A549 (cell line): ENCODE measurements at regions of chr22 and their contacts with region 1.

Region 1: DNA sequence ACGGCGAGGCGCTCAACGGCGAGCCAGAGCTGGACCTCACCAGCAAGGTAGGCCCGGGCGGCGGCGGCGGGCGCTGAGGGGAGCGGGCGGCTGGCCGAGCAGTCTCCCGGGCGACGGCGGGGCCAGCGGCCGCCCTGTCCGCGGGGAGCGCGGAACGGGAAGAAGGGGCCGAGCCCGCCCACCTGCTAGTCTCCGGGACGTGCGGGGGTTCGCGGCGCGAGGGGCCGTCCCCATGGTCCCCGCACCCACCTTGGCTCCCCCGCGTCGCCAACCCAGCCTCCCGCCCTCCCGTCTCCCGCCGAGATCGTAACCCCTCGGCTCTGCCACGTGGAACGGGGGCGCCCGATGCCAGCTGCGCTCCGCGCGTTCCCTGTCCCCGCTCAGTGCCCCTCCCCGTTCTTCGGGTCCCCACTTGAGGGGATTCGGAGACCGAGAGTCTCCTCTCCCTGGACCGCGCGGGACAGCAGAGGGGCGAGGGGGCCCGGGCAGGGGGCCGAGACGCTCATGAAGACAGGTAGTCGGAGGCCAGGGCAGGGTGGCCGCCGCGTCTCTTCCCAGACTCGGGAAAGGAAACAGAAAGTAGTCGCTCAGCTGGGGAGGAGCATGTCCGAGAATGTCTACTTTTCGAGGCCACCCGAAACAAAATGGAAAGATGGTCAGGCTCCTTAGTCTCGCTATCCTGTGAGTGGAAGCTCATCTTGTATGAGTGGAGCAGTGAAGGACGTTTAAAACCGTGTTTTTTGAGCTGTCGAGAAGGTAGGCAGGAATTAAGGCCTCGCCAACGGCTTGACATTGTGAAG is 557 bp downstream of the GTPBP1 start:
- DNase-seq: no peak
- ATAC-seq: peak; percentile 1 to 13; a peak in 5 of 6 replicates
- H3K4me3 ChIP-seq: peak overlapping the region; percentile 82
- H3K27ac ChIP-seq: peak overlapping the region; percentile 90 to 97
- H3K4me1 ChIP-seq: peaks cover 22% of the 10 kb centered on the region; the same call in 2 of the 3 replicates
- CTCF ChIP-seq: no peak
- EP300 ChIP-seq: no peak
- POLR2A ChIP-seq: no peak
- RAD21 ChIP-seq: no peak

Region 2: DNA sequence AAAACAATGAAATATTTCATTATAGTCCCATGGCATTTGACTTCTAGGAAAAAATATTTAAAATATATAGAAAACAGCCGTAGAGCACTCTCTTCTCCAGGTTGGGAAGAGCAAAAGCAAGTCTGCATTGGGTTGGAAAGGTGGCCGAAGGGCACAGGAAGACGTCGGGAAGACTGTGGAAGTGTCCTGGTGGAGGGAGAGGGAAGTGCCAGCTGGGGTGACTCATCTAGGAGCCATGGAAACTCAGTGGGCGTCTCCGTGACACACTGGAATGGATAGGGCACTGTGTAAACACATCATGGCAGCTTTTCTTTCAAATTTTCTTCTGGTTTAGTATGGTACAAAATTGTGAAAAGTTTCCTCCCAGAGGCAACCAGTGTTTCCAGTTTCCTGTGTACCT is 12.1 kb after region 1 on chr22:
- CTCF ChIA-PET with region 1: interaction called, 22 read pairs
- POLR2A ChIA-PET with region 1: interaction called, 7 read pairs
- DNase-seq: peak; percentile 79 to 84
- ATAC-seq: peak; percentile 100
- H3K4me3 ChIP-seq: no peak overlapping the region
- H3K27ac ChIP-seq: peak overlapping the region in 1 of 2 experiments; percentile 62; a peak in 3 of 6 replicates
- H3K4me1 ChIP-seq: peaks cover 15% of the 10 kb centered on the region
- CTCF ChIP-seq: no peak
- EP300 ChIP-seq: no peak
- POLR2A ChIP-seq: no peak
- RAD21 ChIP-seq: 0 out of 5 replicates have a peak, but pooled peaks of 1 of the 2 experiments have one; percentile 2

Region 3: GRCh38 chr22:38724926-38725571 is 18.7 kb after region 1 on chr22:
- CTCF ChIA-PET with region 1: interaction called, 12 read pairs
- POLR2A ChIA-PET with region 1: no interaction called
- DNase-seq: peak; percentile 49 to 57
- ATAC-seq: peak; percentile 81 to 90
- H3K4me3 ChIP-seq: no peak overlapping the region
- H3K27ac ChIP-seq: no peak overlapping the region
- H3K4me1 ChIP-seq: no peaks in the 10 kb centered on the region
- CTCF ChIP-seq: peak; percentile 34; the same call in 2 of the 3 replicates
- EP300 ChIP-seq: no peak
- POLR2A ChIP-seq: no peak
- RAD21 ChIP-seq: no peak